Heart right ventricle (tissue), 16 donors: ENCODE measurements at regions of chr2 and their contacts with region 1.

Region 1: GRCh38 chr2:201574766-201575165 is 68.5 kb downstream of the TMEM237 start:
- DNase-seq: no peak
- ATAC-seq: no peak
- H3K4me3 ChIP-seq: no peak overlapping the region
- H3K27ac ChIP-seq: no peak overlapping the region
- H3K4me1 ChIP-seq: peaks cover 0 to 5% (median 0%) of the 10 kb centered on the region in 9 donors
- H3K27me3 ChIP-seq: no peaks in the 10 kb centered on the region
- CTCF ChIP-seq: no peak

Region 2: DNA sequence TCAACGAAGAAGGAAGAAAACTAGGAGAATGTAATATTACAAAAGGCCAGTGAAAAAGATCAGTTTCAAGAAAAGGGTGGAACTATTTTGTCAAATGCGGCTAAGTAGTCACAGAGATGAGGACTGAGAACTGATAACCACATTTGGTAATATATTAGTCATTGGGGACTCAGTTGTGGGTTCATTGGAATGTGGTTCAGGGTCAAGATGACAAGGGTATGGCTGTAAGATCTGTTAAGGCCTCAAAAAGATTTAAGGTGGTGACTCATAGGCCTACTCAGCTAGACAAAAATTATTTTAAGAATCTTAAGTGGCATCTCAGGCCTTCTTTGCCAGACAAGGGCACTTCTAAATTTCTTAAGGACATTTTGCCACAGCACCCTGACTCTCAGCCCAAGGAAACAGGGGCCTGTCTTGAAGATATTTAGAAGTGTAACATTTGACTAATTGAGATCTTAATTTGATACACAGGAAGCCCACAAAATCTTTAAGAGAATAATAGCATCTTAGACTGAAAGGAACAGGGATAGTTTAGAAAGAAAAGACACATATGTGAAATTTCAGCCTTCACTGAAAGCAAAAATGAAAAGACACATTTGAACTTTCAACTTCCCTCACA is 42.0 kb before region 1 on chr2:
- intact Hi-C with region 1: loop called in 1 of 10 experiments (anchors 2 kb)
- DNase-seq: no peak
- ATAC-seq: no peak
- H3K4me3 ChIP-seq: no peak overlapping the region
- H3K27ac ChIP-seq: no peak overlapping the region
- H3K4me1 ChIP-seq: no peaks in the 10 kb centered on the region
- H3K27me3 ChIP-seq: no peaks in the 10 kb centered on the region
- CTCF ChIP-seq: no peak